PC-3 (cell line): ENCODE measurements at regions of chr3 and their contacts with region 1.

Region 1: GRCh38 chr3:189664311-189664710 is 33.1 kb downstream of the TP63 start:
- DNase-seq: peak; percentile 91
- ATAC-seq: peak; percentile 99
- H3K4me3 ChIP-seq: no peak overlapping the region
- H3K27ac ChIP-seq: peak overlapping the region; percentile 7; the same call in 1 of the 2 replicates
- H3K4me1 ChIP-seq: peaks cover 16% of the 10 kb centered on the region
- H3K27me3 ChIP-seq: no peaks in the 10 kb centered on the region
- CTCF ChIP-seq: no peak

Region 2: DNA sequence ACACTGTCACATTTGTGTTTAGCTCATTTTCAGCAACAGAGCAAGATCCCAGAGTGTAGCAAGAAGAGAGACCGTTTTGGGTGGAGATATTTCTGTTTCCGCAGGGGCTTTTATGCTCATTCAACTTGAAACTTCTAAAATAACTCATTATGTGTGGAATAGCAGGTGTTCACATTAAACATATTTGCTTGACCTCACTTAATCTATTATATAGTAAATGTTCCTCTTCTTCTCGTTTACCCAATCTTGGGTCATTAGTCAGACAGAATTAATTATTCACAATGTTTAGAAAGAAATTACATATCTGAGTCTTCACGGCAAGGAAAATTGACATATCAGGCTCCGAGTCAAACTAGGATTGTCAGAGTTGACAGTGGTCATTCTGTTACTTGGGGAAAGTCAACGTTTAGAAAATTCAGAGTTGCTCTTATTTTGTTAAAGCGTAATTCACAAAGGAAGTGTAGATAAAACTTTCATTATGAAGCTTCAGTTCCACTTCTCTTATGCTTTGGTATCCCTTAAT is 269.7 kb before region 1 on chr3:
- CTCF ChIA-PET with region 1: no interaction called
- POLR2A ChIA-PET with region 1: no interaction called
- intact Hi-C with region 1: loop called (anchors 10 kb)
- DNase-seq: no peak
- ATAC-seq: no peak
- H3K4me3 ChIP-seq: no peak overlapping the region
- H3K27ac ChIP-seq: no peak overlapping the region
- H3K4me1 ChIP-seq: peaks cover 20% of the 10 kb centered on the region
- H3K27me3 ChIP-seq: no peaks in the 10 kb centered on the region
- CTCF ChIP-seq: no peak

Region 3: GRCh38 chr3:189677667-189678066 is 13.4 kb after region 1 on chr3:
- CTCF ChIA-PET with region 1: no interaction called
- POLR2A ChIA-PET with region 1: no interaction called
- intact Hi-C with region 1: no loop called
- DNase-seq: no peak
- ATAC-seq: no peak
- H3K4me3 ChIP-seq: no peak overlapping the region
- H3K27ac ChIP-seq: no peak overlapping the region
- H3K4me1 ChIP-seq: peaks cover 15% of the 10 kb centered on the region
- H3K27me3 ChIP-seq: no peaks in the 10 kb centered on the region
- CTCF ChIP-seq: no peak